Ascending aorta (tissue), 2 donors: ENCODE measurements at regions of chr6 and their contacts with region 1.

Region 1: DNA sequence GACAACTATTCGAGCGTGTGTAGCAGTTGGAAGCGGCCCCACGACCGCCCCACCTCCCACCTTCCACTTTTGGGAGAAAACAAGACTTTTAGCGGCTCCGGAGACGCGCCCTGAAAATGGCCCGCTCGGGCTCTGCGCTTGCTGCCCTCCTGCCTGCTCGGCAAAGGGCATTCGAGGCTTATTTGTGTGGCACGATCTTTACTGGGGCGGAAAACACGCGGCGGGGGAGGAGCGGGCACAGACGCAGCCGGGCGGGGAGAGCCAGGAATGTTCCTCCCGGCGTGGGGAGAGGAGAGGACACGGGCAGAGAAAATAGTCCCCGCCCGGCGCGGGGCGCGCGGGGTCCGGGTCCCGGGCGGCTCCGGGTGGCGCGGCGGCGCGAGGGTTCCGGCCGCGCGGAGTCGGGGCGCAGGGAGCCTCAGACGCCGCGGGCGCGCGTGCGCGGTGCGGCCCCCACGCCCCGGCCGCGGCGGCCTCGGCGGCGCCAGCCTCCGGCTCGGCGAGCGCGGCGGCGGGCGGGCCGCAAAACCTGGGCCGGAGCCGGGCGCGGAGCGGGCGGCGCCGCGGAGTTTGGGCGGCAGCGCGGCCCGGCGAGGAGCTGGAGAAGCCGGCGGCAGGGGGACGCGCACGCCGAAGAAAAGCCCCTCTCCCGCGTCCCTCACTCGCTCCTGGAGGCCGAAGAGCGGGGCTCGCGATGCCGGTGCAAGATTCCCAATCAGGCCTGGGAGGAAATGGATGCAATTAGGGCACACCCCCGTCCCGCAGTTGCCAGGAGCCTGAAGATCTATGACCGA is 90.0 kb upstream of the ARID1B start:
- DNase-seq: peak; percentile 77 to 97
- H3K4me3 ChIP-seq: peak overlapping the region; percentile 71 to 93
- H3K27ac ChIP-seq: peak overlapping the region; percentile 97
- H3K4me1 ChIP-seq: peaks cover 0 to 6% of the 10 kb centered on the region in 2 donors
- H3K27me3 ChIP-seq: no peaks in the 10 kb centered on the region
- CTCF ChIP-seq: no peak

Region 2: GRCh38 chr6:156564127-156564806 is 122.9 kb before region 1 on chr6:
- intact Hi-C with region 1: loop called (anchors 1 kb)
- DNase-seq: peak; percentile 30 to 83
- H3K4me3 ChIP-seq: no peak overlapping the region
- H3K27ac ChIP-seq: no peak overlapping the region
- H3K4me1 ChIP-seq: peaks cover 0 to 4% of the 10 kb centered on the region in 2 donors
- H3K27me3 ChIP-seq: no peaks in the 10 kb centered on the region
- CTCF ChIP-seq: peak; percentile 84 to 96 (median 94)

Region 3: DNA sequence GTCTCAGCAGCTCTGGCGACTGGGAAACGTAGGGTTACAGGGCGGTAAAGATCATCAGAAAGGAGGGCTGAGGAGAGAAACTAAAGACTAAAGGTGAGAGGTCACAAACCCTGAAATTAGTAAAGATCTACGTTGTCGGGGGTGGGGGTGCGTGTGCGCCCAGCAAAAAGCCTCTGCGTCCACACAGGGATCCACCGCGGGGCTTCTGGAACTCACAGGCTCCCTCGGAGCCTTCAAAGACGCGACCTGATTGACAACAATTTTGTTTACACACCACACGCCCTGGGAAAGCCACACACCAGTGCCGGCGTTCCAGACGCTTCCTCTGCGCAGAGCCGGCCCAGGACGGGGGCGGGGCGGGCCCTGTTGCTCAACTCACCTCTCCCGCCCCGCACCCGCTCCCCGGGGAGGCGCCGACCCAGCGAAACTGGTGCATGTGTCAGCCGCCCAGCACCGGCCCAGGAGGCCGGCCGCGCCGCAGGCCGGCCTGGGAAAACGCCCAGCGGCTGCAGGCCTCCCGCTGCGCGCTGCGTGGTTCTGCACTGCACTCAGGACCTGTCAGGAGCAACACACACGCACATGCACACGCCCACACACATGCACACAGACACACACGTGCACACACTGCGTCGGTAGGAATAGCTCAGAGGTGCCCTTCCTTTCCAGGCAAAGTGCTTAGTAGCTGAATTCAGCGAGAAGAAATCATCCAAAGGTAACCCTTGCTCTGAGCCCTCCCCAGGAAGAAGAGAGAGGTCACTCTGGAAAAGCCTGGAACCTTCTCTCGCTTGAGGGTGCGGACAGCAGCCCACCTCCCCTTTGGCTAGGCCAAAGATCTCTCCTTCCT is 32.8 kb after region 1 on chr6:
- intact Hi-C with region 1: loop called (anchors 1 kb)
- DNase-seq: peak; percentile 80 to 96
- H3K4me3 ChIP-seq: peak overlapping the region; percentile 34 to 56
- H3K27ac ChIP-seq: peak overlapping the region; percentile 91
- H3K4me1 ChIP-seq: peaks cover 4 to 11% of the 10 kb centered on the region in 2 donors
- H3K27me3 ChIP-seq: no peaks in the 10 kb centered on the region
- CTCF ChIP-seq: no peak

Region 4: DNA sequence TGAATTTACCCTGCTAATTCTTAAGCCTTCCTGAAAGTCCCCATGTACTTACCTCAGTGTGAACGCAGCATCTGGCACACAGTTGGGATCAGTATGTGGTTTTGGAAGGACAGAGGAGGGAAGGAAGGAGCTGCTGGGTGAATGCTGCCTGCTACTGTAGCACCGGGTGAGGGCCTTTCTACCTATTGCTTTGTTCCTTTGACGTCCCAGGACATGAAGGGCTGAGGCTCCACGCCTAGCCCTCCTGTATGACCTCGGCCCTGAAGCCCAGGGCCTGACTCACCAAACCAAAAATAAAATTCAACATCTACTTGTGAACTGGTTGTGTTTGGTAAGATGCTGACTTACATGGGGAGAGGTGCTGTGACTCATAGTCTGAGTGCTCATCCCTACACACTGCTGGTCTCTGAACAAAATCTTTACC is 141.1 kb after region 1 on chr6:
- intact Hi-C with region 1: loop called (anchors 10 kb)
- DNase-seq: no peak
- H3K4me3 ChIP-seq: no peak overlapping the region
- H3K27ac ChIP-seq: peak overlapping the region; percentile 80 to 91
- H3K4me1 ChIP-seq: peaks cover 2 to 47% of the 10 kb centered on the region in 2 donors
- H3K27me3 ChIP-seq: no peaks in the 10 kb centered on the region
- CTCF ChIP-seq: no peak

Region 5: GRCh38 chr6:157148391-157149323 is 461.5 kb after region 1 on chr6:
- intact Hi-C with region 1: loop called (anchors 2 kb)
- DNase-seq: peak; percentile 42 to 89
- H3K4me3 ChIP-seq: peak overlapping the region; percentile 28 to 33
- H3K27ac ChIP-seq: peak overlapping the region; percentile 87 to 88
- H3K4me1 ChIP-seq: peaks cover 19 to 51% of the 10 kb centered on the region in 2 donors
- H3K27me3 ChIP-seq: no peaks in the 10 kb centered on the region
- CTCF ChIP-seq: no peak